ENCODE measurements at regions of chr5 and their contacts with region 1.

Region 1: DNA sequence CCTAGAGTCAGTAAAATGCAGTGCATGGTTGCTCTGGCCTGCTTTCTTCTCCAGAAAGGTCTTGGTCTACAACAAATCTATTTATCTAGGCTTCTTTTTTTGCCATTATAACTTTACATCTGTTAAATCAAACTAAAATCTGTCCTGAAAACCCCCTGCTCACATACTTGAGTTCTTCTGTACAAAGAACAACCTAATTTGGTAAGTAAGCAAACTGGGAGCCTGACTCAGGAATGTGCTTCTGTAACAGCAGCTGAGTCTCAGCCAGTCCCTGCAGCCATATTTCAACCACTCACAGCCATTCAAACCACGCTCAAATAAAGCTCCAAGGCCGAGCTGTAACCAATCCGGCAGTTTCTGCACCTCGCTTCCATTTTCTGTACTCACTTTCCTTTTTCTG is 95.8 kb downstream of the PLPP1 start:
- DNase-seq: no peak
- H3K4me3 Mint-ChIP-seq: no peak overlapping the region
- H3K27ac Mint-ChIP-seq: no peak overlapping the region
- H3K4me1 Mint-ChIP-seq: peaks cover 44% of the 10 kb centered on the region
- H3K27me3 Mint-ChIP-seq: no peaks in the 10 kb centered on the region

Region 2: DNA sequence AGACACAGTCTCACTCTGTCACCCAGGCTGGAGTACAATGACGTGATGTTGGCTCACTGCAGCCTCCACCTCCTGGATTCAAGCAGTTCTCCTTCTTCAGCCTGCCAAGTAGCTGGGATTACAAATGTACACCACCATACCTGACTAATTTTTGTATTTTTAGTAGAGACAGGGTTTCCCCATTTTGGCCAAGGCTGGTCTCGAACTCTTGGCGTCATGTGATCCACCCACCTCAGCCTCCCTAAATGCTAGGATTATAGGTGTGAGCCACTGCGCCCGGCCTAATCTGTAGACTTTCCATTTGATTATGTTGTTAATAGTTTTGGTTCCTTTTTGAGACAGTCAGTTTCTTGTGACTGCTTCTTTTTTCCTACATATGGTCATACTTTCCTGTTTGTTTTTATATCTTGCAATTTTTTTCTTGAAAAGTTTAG is 100.2 kb before region 1 on chr5:
- CTCF ChIA-PET with region 1: no interaction called
- POLR2A ChIA-PET with region 1: no interaction called
- intact Hi-C with region 1: loop called (anchors 5 kb)
- DNase-seq: peak; percentile 81
- H3K4me3 Mint-ChIP-seq: no peak overlapping the region
- H3K27ac Mint-ChIP-seq: peak overlapping the region; percentile 54
- H3K4me1 Mint-ChIP-seq: peaks cover 21% of the 10 kb centered on the region
- H3K27me3 Mint-ChIP-seq: no peaks in the 10 kb centered on the region

Region 3: DNA sequence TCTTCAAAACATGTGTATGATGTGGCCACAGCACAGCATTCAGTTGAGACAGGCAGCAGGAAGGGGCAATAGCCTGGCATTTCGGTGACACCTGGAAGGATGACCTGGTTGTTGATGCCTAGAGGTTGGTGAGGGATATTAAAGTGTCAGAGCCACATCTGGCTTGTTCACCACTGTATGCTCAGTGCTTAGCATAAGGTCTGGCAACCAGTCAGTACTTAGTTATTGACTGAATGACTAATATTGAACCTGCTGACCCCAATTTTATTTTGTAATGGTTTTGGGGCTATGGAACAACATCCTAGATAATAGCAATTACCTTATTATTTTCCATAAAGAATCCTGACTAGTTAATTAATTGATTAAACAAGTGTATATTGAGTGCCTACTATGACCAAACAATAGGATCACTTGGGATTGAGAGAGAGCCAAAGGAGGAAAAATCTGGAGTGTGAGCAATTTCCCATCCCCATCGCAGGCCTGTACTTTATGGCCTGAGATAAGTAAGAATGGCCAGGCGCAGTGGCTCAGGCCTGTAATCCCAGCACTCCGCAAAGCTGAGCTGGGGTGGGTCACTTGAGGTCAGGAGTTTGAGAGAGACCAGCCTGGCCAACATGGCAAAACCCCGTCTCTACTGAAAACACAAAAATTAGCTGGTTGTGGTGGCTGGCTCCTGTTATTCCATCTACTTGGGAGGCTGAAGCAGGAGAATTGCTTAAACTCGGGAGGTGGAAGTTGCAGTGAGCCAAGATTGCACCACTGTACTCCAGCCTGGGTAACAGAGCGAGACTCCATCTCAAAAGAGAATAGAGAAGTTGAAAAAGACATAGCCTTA is 181.2 kb after region 1 on chr5:
- CTCF ChIA-PET with region 1: no interaction called
- POLR2A ChIA-PET with region 1: no interaction called
- intact Hi-C with region 1: no loop called
- DNase-seq: no peak
- H3K4me3 Mint-ChIP-seq: no peak overlapping the region
- H3K27ac Mint-ChIP-seq: no peak overlapping the region
- H3K4me1 Mint-ChIP-seq: no peaks in the 10 kb centered on the region
- H3K27me3 Mint-ChIP-seq: no peaks in the 10 kb centered on the region